Left ventricle myocardium superior (tissue), 1 donor: ENCODE measurements at regions of chrX and their contacts with region 1.

Region 1: GRCh38 chrX:153953342-153953830 is 8.9 kb upstream of the RENBP start:
- DNase-seq: peak; percentile 79
- ATAC-seq: peak; percentile 74

Region 2: DNA sequence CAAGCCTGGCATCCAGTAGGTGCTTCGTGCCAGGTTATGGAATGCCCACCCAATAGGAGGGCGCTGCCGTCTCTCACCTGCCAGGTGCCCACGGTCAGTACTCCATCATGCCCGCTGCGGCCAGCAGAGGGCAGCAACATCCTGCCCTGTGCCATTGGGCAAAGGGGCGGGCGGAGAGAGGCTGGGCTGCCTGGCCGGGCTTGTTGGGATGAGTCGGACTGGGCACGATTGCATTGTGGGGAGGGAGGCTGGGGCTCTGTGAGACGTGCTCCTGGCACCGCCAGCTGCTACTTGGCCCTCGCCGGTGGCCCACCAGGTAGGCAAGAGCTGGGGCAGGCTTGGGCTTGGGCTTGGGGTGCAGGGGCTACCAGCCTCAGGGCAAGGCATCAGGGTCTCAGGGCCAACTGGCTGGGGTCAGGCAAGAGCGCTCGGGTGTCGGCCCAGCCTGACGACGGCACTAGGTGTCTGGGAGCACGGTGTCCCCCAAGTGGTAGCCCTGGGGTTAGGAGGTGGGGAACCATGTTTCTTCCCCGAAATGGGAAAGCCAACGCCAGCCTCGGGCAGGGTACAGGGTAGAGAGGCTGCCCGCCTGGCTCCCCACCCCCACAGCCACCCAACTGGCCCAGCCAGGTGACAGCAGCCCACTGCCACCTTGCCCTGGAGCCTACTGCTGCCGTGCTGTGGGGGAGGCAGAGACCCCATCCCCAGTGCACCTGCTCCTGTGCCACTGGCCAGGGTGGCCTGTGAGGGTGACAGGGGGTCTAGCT is 189.2 kb before region 1 on chrX and contains the start of gene PLXNB3:
- intact Hi-C with region 1: loop called (anchors 10 kb)
- DNase-seq: peak; percentile 85
- ATAC-seq: peak; percentile 90
- total RNA-seq, gene PLXNB3: 2.4 TPM